ENCODE measurements at regions of chr1 and their contacts with region 1.

Region 1: GRCh38 chr1:151739590-151740375 is 18.5 kb downstream of the RIIAD1 start:
- DNase-seq: peak in 2 of 6 donors; percentile 36 to 38
- ATAC-seq: peak in 3 of 4 donors; percentile 59 to 83 (median 81)
- H3K4me3 ChIP-seq: no peak overlapping the region
- H3K27ac ChIP-seq: peak overlapping the region in 1 of 4 donors; percentile 35
- H3K4me1 ChIP-seq: peaks cover 0 to 4% (median 0%) of the 10 kb centered on the region in 3 donors
- H3K27me3 ChIP-seq: no peaks in the 10 kb centered on the region
- CTCF ChIP-seq: no peak

Region 2: DNA sequence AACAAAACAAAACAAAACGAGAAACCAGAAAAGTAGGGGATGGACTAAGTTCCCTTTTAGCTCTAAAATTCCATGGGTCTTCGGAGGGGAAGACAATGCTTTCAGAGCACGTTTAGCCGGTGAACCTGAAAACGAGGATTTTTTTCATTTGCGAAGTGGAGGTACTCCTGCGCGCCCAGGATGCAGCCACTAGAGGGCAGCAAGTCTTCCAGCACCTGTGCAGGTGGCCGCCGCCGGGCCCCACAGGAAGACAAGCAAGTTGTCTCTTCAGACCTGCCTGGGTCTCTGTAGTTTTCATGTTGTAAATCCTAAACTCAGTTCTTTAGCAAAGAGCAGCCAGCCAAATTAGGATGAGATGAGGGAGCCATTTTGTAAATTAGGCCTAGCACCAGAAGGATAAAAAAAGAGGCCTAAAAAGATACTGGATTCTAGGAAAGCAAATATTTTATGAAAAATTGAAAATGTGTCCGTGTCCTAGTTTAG is 145.6 kb before region 1 on chr1:
- intact Hi-C with region 1: loop called in 2 of 3 experiments (anchors 2 to 10 kb)
- DNase-seq: peak; percentile 77 to 94 (median 87)
- ATAC-seq: peak; percentile 86 to 97 (median 95)
- H3K4me3 ChIP-seq: no peak overlapping the region
- H3K27ac ChIP-seq: no peak overlapping the region
- H3K4me1 ChIP-seq: no peaks in the 10 kb centered on the region
- H3K27me3 ChIP-seq: no peaks in the 10 kb centered on the region
- CTCF ChIP-seq: peak; percentile 90 to 95 (median 92)

Region 3: GRCh38 chr1:151847842-151848596 is 108.2 kb after region 1 on chr1:
- intact Hi-C with region 1: no loop called
- DNase-seq: no peak
- ATAC-seq: no peak
- H3K4me3 ChIP-seq: no peak overlapping the region
- H3K27ac ChIP-seq: no peak overlapping the region
- H3K4me1 ChIP-seq: peaks cover 0 to 5% (median 0%) of the 10 kb centered on the region in 3 donors
- H3K27me3 ChIP-seq: no peaks in the 10 kb centered on the region
- CTCF ChIP-seq: no peak

Measured in pancreas (tissue), 10 donors.